Mammary epithelial cell (primary cell): ENCODE measurements at regions of chr2 and their contacts with region 1.

Region 1: GRCh38 chr2:159712143-159712928 is at the start of gene MARCHF7:
- DNase-seq: peak; percentile 97
- H3K4me3 ChIP-seq: peak within 1 kb of the TSS; percentile 70 to 87 (median 85)
- H3K27ac ChIP-seq: peak within 1 kb of the TSS; percentile 88
- H3K4me1 ChIP-seq: peaks cover 24% of the 10 kb centered on the region
- H3K27me3 ChIP-seq: no peaks in the 10 kb centered on the region
- CTCF ChIP-seq: peak; percentile 60 to 82
- total RNA-seq, gene MARCHF7: 84.3 to 121 TPM

Region 2: GRCh38 chr2:159286709-159287441 is 425.5 kb before region 1 on chr2:
- CTCF ChIA-PET with region 1: no interaction called
- dilution Hi-C with region 1: no loop called
- in situ Hi-C with region 1: no loop called
- intact Hi-C with region 1: loop called (anchors 5 kb)
- DNase-seq: peak; percentile 95
- H3K4me3 ChIP-seq: peak overlapping the region; percentile 34 to 76 (median 72)
- H3K27ac ChIP-seq: peak overlapping the region; percentile 48
- H3K4me1 ChIP-seq: peaks cover 14% of the 10 kb centered on the region
- H3K27me3 ChIP-seq: no peaks in the 10 kb centered on the region
- CTCF ChIP-seq: no peak

Region 3: GRCh38 chr2:159516241-159516766 is 196.0 kb before region 1 on chr2:
- CTCF ChIA-PET with region 1: no interaction called
- dilution Hi-C with region 1: no loop called
- in situ Hi-C with region 1: no loop called
- intact Hi-C with region 1: loop called (anchors 1 kb)
- DNase-seq: peak; percentile 80
- H3K4me3 ChIP-seq: peak overlapping the region; percentile 38 to 56 (median 48)
- H3K27ac ChIP-seq: peak overlapping the region; percentile 82
- H3K4me1 ChIP-seq: peaks cover 10% of the 10 kb centered on the region
- H3K27me3 ChIP-seq: no peaks in the 10 kb centered on the region
- CTCF ChIP-seq: peak in 1 of 2 donors; percentile 32

Region 4: GRCh38 chr2:159615140-159615951 is 97.0 kb before region 1 on chr2:
- CTCF ChIA-PET with region 1: interaction called, 3 read pairs
- dilution Hi-C with region 1: loop called (anchors 25 kb)
- in situ Hi-C with region 1: no loop called
- intact Hi-C with region 1: loop called (anchors 1 kb)
- DNase-seq: peak; percentile 91
- H3K4me3 ChIP-seq: peak overlapping the region; percentile 68 to 99 (median 93)
- H3K27ac ChIP-seq: peak overlapping the region; percentile 96
- H3K4me1 ChIP-seq: peaks cover 16% of the 10 kb centered on the region
- H3K27me3 ChIP-seq: no peaks in the 10 kb centered on the region
- CTCF ChIP-seq: no peak

Region 5: GRCh38 chr2:159695795-159696448 is 16.4 kb before region 1 on chr2:
- CTCF ChIA-PET with region 1: no interaction called
- dilution Hi-C with region 1: no loop called
- in situ Hi-C with region 1: no loop called
- intact Hi-C with region 1: no loop called
- DNase-seq: no peak
- H3K4me3 ChIP-seq: no peak overlapping the region
- H3K27ac ChIP-seq: no peak overlapping the region
- H3K4me1 ChIP-seq: no peaks in the 10 kb centered on the region
- H3K27me3 ChIP-seq: no peaks in the 10 kb centered on the region
- CTCF ChIP-seq: no peak